ENCODE measurements at regions of chr11 and their contacts with region 1.

Region 1: DNA sequence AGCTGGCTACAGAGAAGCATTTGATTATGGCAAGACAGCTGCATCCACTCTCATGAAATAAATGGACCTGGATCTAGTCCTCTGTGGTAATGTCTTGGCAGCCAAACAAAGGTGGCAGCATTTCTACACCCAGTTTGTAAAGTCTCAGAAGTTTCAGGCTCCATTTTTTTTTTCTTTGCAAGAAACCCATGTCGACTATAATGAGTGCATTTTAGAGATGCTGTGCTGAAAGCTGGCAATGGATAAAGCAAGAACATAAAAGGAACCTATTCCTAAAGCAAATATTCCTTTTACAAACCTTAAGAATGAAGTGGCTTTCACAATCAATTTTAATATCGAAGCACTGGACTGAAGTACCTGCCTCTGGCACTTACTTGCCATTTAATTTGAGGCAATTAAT is 33.5 kb downstream of the THAP12 start:
- DNase-seq: no peak
- H3K4me3 ChIP-seq: no peak overlapping the region
- H3K27ac ChIP-seq: no peak overlapping the region
- H3K4me1 ChIP-seq: no peaks in the 10 kb centered on the region
- CTCF ChIP-seq: 0 out of 2 replicates have a peak, but pooled peaks have one; percentile 9

Region 2: GRCh38 chr11:76419896-76420295 is 72.4 kb after region 1 on chr11:
- CTCF ChIA-PET with region 1: no interaction called
- POLR2A ChIA-PET with region 1: no interaction called
- intact Hi-C with region 1: loop called (anchors 10 kb)
- DNase-seq: peak; percentile 48
- H3K4me3 ChIP-seq: no peak overlapping the region
- H3K27ac ChIP-seq: no peak overlapping the region
- H3K4me1 ChIP-seq: no peaks in the 10 kb centered on the region
- CTCF ChIP-seq: peak; percentile 82

Region 3: DNA sequence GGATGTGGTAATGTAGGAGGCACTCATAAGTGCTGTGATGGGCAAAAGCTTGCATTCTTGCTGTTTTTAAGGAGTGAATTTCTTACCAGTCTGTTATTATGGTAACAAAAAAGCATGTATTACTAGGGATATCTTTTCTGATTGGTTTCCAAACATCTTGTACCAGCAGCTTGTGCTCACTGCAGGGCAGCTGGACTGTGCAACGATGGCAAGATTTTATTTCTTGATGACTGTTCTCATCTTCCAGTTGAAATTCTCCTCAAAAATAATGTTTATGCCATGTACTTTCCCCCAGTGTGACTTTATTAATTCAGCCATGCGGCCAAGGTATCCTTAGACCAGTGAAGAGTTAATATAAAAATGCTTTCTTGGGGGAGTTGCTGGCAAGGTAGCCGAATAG is 132.8 kb after region 1 on chr11:
- CTCF ChIA-PET with region 1: no interaction called
- POLR2A ChIA-PET with region 1: no interaction called
- intact Hi-C with region 1: no loop called
- DNase-seq: no peak
- H3K4me3 ChIP-seq: no peak overlapping the region
- H3K27ac ChIP-seq: no peak overlapping the region
- H3K4me1 ChIP-seq: no peaks in the 10 kb centered on the region
- CTCF ChIP-seq: no peak